Posterior vena cava (tissue), 2 donors: ENCODE measurements at regions of chr6 and their contacts with region 1.

Region 1: DNA sequence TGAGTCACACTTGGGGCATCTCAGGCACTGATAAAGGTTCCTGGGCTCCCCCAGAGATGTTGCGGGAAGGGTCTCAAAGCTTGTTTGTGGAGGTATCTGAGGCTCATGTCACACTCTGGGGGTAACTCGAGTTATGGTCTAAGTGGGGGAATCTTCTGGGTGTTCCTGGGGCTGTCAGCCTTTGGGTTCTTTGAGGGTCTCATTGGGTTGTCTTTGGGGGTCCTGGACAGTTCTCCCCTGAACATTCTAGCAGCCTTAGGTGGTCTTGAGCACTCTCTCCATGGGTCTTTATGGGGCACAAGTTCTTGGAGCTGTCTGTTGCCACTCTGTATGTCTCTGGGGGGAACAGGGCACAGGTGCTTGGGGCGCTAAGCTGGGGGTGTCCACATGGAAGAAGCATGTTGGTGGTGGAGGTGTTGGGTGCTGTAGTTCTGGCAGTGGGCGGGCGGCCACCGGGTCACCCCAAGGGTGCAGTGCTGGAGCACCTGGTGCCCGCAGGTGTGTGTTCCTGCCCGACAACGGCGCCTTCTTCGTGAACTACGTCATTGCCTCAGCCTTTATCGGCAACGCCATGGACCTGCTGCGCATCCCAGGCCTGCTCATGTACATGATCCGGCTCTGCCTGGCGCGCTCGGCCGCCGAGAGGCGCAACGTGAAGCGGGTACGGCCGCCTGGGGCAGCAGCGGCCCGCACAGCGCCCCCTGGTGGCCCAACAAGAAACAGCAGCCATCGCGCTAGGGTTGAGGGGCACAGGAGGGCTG is 7.1 kb upstream of the CAPN11 start:
- DNase-seq: peak; percentile 93

Region 2: DNA sequence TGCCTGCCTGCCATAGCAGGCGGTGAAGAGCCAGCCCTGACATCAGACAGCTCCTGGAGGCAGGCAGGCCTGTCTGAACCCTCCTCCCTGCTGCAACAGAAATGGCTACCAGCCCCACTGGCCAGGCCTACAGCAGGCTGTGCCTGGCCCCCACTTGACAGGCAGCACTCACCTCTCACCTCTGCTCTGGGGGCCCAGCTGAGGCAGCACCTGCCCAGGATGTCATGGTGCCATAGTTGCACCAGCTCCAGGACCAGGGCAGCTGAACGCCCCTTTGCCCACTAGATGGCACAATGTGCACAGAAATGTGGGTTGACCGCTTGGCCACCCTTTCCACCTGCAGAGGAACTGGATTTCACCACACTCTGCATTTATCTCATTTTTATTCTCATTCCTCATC is 54.9 kb before region 1 on chr6:
- intact Hi-C with region 1: loop called (anchors 2 to 5 kb)
- DNase-seq: peak; percentile 90

Region 3: DNA sequence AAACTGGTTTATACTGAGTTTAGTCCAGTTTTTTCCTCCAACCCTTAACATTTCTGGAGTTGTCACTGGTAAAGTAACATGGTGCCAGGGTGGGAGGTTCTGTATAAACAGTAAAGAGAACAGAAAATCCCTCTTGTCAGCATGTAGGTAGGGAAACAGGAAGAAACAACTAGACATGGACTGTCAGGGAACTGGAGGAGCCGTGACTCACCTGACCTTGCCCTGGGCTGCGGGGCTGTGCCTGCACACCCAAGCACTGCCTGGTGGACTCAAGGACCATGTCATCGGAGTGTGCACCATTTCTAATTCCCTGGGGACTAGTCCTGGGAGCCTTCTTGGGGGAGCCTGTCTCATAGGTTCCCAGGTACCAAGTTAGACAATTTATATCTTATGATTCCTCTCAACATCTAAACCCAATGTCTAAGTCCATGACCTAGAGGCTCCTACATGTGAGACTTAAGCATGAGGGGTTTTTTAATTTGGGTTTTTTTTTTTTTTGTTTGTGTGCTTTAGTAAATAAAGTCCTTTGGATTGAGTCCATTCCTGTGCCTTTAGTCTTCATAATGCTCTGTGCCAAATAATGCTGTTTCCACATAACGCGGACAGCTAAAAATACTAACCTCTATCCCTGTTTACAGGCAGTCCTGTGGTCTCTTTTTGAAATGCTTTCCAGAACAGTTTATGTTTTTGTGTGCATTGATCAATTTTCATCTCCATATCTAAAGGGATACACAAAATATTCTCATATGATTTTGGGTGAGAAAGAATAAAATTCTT is 1363.1 kb after region 1 on chr6:
- intact Hi-C with region 1: no loop called
- DNase-seq: no peak